PC-9 (cell line): ENCODE measurements at regions of chr10 and their contacts with region 1.

Region 1: DNA sequence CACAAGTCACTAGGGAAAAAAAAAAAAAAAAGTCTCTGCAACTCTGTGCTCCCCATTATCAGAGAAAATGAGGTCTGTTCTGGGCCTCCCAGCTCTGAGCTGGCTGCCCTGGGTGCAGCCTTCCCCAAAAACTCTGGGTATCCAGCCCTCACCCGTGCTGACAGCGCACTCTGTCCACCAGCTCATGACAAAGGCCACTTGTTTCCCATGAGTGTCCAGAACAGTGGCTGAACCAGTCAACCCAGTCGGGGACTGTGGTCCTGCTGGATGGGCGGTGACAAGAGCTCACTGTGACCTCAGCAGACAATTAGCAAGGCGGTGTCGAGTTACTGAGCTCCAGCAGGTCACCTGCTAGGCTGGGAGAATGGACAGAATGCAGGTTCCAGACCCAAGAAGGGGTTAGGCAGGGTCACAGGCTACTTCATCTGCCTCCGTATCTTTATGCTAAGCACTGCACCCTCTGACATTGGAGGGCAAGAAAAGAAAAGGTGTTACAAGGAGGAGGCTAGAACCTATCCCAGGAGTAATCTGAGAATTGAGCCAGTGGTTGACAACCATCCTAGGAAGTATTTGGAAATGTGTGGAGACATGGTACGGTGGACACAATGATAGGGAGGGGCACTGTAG is 37.2 kb downstream of the DLG5 start:
- DNase-seq: peak; percentile 93 to 97
- H3K4me3 ChIP-seq: no peak overlapping the region
- H3K27ac ChIP-seq: peak overlapping the region; percentile 73
- H3K4me1 ChIP-seq: peaks cover 34% of the 10 kb centered on the region
- H3K27me3 ChIP-seq: no peaks in the 10 kb centered on the region
- CTCF ChIP-seq: no peak

Region 2: DNA sequence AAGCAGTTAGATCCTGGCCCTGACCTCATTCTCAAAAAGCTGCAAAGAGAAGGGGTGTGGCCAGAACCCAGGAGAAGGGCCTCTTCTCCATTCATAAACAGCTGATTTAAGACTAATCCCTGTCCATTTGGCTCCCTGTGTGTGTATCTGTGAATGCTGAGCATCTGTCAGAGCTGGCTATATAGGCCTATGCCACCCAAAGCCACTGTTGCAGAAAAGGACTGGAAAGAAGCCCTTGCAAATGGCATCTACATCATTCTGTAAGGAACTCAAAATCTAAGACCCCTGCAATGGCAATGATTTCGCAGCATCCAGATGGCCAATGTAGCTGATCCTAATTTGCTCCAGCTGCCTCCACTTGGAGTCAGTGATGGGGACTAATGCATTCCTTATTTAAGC is 636.2 kb before region 1 on chr10:
- CTCF ChIA-PET with region 1: no interaction called
- POLR2A ChIA-PET with region 1: no interaction called
- intact Hi-C with region 1: no loop called
- DNase-seq: no peak
- H3K4me3 ChIP-seq: no peak overlapping the region
- H3K27ac ChIP-seq: no peak overlapping the region
- H3K4me1 ChIP-seq: no peaks in the 10 kb centered on the region; the same call in 1 of the 2 replicates
- H3K27me3 ChIP-seq: no peaks in the 10 kb centered on the region
- CTCF ChIP-seq: no peak

Region 3: DNA sequence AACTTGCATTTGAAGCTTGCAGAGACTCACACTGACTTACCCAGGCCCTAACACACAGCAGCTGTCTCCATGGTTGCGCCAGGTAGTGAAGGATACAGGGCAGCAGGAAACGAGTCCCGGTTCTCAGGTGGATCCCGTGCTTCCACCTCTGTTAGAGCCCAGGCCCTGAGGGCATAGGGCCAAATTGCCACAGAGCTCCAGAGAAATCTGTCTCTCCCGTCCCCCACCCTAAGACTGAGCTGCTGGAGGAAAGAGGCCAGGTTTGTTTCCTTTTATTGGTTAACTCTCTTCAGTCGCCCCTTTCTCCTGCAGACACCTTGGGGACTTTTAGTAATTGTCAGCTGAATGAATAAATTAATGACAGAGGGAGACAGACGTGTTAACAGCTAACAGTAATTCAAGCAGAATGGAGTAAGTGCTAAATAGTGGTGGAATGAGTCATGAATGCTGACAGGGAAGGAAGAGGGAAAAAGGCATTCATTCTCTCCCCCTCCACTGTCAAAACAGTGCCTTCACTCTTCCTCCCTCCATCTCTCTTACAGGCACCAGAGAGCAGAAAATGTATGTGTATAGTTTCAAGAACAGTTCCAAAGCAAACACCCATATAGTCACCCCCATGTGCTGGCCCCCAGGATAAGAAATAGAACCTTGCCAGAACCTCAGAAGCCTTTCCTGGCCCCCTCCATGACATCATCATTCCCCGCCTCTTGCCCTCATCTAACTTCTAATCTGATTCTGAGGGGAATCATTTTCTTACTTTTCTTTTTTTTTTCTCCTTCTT is 53.9 kb after region 1 on chr10:
- CTCF ChIA-PET with region 1: no interaction called
- POLR2A ChIA-PET with region 1: no interaction called
- intact Hi-C with region 1: loop called (anchors 5 kb)
- DNase-seq: peak; percentile 80 to 94
- H3K4me3 ChIP-seq: no peak overlapping the region; the same call in 1 of the 2 replicates
- H3K27ac ChIP-seq: peak overlapping the region; percentile 92
- H3K4me1 ChIP-seq: peaks cover 60% of the 10 kb centered on the region
- H3K27me3 ChIP-seq: no peaks in the 10 kb centered on the region
- CTCF ChIP-seq: no peak